HEK293 (cell line): ENCODE measurements at regions of chr18 and their contacts with region 1.

Region 1: GRCh38 chr18:22933206-22933957 is at the start of gene RBBP8:
- H3K4me3 ChIP-seq: peak within 1 kb of the TSS; percentile 60
- H3K27ac ChIP-seq: peak within 1 kb of the TSS; percentile 95
- H3K4me1 ChIP-seq: peaks cover 5% of the 10 kb centered on the region
- CTCF ChIP-seq: no peak

Region 2: DNA sequence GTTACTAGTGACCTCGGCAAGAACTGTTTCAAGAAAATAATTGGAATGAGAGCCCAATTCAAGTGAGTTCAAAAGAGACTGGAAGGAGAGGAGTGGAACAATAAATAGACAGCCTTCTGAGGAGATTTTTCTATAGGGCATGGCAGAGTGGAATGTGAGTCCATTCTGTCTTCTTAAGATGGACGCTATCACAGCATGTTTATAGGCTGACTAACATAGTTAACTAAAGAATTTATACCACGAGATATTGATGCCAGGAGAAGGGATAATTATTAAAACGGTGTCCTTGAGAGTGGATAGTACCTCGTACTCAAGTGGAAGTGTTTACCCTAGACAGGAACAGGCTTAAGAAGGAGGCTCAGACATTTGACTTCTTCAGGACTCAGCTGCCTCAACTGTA is 143.8 kb before region 1 on chr18:
- CTCF ChIA-PET with region 1: no interaction called
- POLR2A ChIA-PET with region 1: no interaction called
- H3K4me3 ChIP-seq: no peak overlapping the region
- H3K27ac ChIP-seq: no peak overlapping the region
- H3K4me1 ChIP-seq: no peaks in the 10 kb centered on the region
- CTCF ChIP-seq: no peak

Region 3: GRCh38 chr18:22813648-22814328 is 119.6 kb before region 1 on chr18:
- CTCF ChIA-PET with region 1: interaction called, 13 read pairs
- POLR2A ChIA-PET with region 1: interaction called, 3 read pairs
- H3K4me3 ChIP-seq: no peak overlapping the region
- H3K27ac ChIP-seq: no peak overlapping the region
- H3K4me1 ChIP-seq: no peaks in the 10 kb centered on the region; the same call in 1 of the 2 replicates
- CTCF ChIP-seq: peak; percentile 57

Region 4: DNA sequence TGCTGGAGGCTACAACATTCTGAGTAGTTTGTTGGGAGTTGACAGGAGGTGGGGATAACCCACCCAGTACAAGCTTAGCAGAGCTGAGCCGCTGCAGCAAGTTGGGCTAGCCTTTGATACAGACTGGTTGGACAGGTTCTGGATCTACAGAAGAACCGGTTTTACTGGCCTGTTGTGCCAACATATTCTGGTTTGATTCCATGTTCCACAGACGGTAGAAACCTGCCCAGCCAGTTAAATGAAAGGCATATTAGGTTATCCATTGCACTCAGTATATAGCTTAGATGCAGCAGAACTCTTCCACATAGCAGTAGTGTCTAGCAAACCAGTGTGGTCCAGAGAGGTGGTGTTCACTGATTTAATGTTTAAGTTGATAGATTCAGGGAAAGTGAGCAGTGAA is 19.5 kb before region 1 on chr18:
- CTCF ChIA-PET with region 1: interaction called, 48 read pairs
- POLR2A ChIA-PET with region 1: interaction called, 3 read pairs
- H3K4me3 ChIP-seq: no peak overlapping the region
- H3K27ac ChIP-seq: no peak overlapping the region
- H3K4me1 ChIP-seq: no peaks in the 10 kb centered on the region
- CTCF ChIP-seq: no peak

Region 5: DNA sequence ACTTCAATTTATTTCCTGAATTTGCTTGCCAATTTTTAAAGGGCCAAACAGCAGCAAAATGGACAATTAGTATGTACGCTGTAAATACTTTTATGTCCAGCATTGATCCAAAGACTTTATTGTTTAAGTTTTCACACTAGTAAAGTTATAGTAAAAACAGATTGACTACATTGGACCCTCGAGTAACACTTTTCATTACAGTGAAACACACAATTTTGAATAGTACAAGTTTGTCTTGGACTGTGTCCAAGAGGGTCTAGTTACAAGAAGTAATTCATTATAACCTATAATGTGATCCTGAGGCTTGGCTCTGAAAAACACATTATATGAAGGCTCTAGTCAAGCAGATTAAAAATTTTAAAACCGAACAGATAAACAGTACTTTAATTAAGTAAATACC is 11.6 kb before region 1 on chr18:
- CTCF ChIA-PET with region 1: interaction called, 48 read pairs
- POLR2A ChIA-PET with region 1: interaction called, 11 read pairs
- H3K4me3 ChIP-seq: no peak overlapping the region
- H3K27ac ChIP-seq: no peak overlapping the region
- H3K4me1 ChIP-seq: peaks cover 10% of the 10 kb centered on the region; the same call in 1 of the 2 replicates
- CTCF ChIP-seq: no peak

Region 6: DNA sequence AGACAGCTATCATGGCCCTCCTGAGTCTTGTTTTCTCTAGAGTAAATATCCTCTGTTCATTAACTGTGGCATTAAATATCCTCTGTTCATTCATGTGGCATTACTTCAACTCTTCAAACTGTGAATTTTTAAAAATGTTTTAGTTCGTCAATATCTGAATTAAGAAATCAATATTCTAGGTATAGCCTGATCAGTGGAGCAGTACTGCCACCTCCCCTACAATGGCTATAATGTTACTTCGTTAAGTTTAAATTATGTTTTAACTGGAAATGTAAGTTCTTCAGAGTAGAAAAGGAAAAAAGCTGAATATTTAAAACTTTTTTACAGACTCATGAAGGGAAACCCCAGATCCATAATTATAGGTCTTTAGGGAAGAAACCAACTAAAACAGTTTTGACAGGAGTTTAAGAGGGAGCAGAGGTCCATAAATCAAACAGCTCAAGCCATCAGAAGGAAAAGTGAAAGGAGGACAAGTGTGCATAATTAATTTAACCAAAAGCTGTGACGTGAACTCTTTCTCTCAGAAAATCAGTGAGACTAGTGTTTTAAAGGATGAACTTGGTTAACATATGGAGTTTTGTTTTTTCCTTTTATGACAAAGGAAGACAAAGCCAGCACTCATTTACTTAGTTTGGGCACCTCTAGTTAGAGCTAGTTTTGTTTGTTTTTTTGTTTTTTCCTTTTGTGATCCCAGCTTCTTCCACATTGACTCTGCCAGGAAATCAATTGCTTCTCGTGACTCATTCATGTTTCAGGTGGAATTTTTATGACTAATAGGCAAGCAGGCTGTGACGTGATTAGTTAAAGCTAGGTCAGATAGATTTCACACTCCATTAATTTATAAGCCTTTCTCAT is 44.7 kb after region 1 on chr18:
- CTCF ChIA-PET with region 1: interaction called, 23 read pairs
- POLR2A ChIA-PET with region 1: interaction called, 3 read pairs
- H3K4me3 ChIP-seq: no peak overlapping the region
- H3K27ac ChIP-seq: no peak overlapping the region
- H3K4me1 ChIP-seq: peaks cover 3% of the 10 kb centered on the region; the same call in 1 of the 2 replicates
- CTCF ChIP-seq: no peak

Region 7: GRCh38 chr18:22983175-22983574 is 49.8 kb after region 1 on chr18:
- CTCF ChIA-PET with region 1: interaction called, 23 read pairs
- POLR2A ChIA-PET with region 1: interaction called, 3 read pairs
- H3K4me3 ChIP-seq: no peak overlapping the region
- H3K27ac ChIP-seq: no peak overlapping the region
- H3K4me1 ChIP-seq: no peaks in the 10 kb centered on the region
- CTCF ChIP-seq: 0 out of 2 replicates have a peak, but pooled peaks have one; percentile 7

Region 8: DNA sequence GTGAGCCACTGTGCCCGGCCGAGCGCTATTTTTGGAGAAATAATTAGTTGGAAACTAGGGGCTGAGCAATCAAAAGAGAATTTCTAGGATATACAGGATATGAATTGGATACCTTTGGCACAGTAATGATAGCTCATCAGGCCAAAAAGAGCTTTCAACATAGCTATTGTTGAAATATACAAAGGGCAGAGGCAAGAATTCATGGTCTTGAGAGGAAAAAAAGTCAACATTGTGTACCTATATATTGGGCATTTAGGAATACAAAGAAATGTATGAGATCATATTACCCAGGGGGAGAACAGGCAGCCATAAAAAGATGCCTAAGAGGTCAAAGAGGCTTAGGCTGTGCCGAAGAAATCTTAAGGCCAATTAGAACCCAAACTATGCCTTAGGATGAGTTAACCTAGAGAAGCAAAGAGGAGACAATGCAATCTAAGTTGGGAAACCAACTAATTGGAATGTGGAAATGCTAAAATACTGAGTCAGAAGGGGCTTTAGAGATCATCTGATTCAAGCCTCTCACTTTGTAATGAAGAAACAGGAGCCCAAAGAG is 98.7 kb after region 1 on chr18:
- CTCF ChIA-PET with region 1: no interaction called
- POLR2A ChIA-PET with region 1: interaction called, 12 read pairs
- H3K4me3 ChIP-seq: no peak overlapping the region
- H3K27ac ChIP-seq: no peak overlapping the region
- H3K4me1 ChIP-seq: no peaks in the 10 kb centered on the region
- CTCF ChIP-seq: no peak